ENCODE measurements at regions of chr4 and their contacts with region 1.

Region 1: GRCh38 chr4:113823291-113823659 is 61.7 kb upstream of the CAMK2D start:
- DNase-seq: no peak
- H3K4me3 Mint-ChIP-seq: no peak overlapping the region
- H3K27ac Mint-ChIP-seq: no peak overlapping the region
- H3K4me1 Mint-ChIP-seq: peaks cover 24% of the 10 kb centered on the region
- H3K27me3 Mint-ChIP-seq: no peaks in the 10 kb centered on the region

Region 2: GRCh38 chr4:113212613-113213012 is 610.7 kb before region 1 on chr4:
- intact Hi-C with region 1: no loop called
- DNase-seq: no peak
- H3K4me3 Mint-ChIP-seq: no peak overlapping the region
- H3K27ac Mint-ChIP-seq: no peak overlapping the region
- H3K4me1 Mint-ChIP-seq: no peaks in the 10 kb centered on the region
- H3K27me3 Mint-ChIP-seq: no peaks in the 10 kb centered on the region

Region 3: DNA sequence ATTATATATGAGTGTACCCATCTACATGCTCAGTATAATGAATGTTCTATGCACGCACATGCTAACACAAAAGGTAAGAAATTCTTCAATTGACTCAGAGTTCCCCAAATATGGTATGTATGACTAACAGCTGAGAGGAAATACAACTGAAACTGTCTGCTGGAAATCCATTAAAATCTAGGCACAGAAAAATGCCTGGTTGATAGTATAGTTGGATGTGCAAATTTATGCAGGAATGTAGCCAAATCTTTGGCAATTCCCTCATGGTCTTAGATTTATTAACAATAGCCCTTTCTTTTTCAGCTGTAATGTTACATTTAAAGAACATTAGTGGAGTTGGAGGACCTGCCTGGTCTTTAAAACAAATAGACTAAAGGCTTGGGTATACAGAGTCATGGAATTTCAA is 67.3 kb before region 1 on chr4:
- intact Hi-C with region 1: no loop called
- DNase-seq: no peak
- H3K4me3 Mint-ChIP-seq: peak overlapping the region; percentile 68
- H3K27ac Mint-ChIP-seq: peak overlapping the region; percentile 80
- H3K4me1 Mint-ChIP-seq: peaks cover 43% of the 10 kb centered on the region
- H3K27me3 Mint-ChIP-seq: no peaks in the 10 kb centered on the region

Region 4: DNA sequence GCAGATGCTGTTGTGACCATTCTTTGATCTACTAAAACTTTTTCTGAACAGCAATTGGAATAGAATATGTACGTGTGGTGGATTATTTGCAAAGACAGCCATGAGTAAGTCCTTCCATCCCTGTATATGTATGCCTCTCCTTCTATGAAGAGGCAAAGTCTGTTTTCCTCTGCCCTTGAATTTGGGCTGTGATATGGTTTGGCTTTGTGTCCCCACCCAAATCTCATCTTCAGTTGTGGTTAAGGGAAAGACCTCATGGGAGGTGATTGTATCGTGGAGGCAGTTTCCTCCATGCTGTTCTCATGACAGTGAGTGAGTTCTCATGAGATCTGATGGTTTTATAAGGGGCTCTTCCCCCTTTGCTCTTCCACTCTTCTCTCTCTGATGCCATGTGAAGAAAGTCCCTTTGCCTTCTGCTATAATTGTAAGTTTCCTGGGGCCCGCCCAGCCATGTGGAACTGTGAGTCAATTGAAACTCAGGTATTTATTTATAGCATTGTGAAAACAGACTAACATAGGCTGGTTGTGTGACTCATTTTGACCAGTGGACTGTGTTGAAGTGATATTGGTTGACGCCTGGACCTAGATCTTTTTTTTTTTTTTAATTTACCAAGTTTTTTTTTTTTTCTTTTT is 46.6 kb after region 1 on chr4:
- intact Hi-C with region 1: loop called (anchors 2 kb)
- DNase-seq: peak; percentile 67
- H3K4me3 Mint-ChIP-seq: no peak overlapping the region
- H3K27ac Mint-ChIP-seq: peak overlapping the region; percentile 90
- H3K4me1 Mint-ChIP-seq: peaks cover 12% of the 10 kb centered on the region
- H3K27me3 Mint-ChIP-seq: no peaks in the 10 kb centered on the region